ENCODE measurements at regions of chr4 and their contacts with region 1.

Region 1: DNA sequence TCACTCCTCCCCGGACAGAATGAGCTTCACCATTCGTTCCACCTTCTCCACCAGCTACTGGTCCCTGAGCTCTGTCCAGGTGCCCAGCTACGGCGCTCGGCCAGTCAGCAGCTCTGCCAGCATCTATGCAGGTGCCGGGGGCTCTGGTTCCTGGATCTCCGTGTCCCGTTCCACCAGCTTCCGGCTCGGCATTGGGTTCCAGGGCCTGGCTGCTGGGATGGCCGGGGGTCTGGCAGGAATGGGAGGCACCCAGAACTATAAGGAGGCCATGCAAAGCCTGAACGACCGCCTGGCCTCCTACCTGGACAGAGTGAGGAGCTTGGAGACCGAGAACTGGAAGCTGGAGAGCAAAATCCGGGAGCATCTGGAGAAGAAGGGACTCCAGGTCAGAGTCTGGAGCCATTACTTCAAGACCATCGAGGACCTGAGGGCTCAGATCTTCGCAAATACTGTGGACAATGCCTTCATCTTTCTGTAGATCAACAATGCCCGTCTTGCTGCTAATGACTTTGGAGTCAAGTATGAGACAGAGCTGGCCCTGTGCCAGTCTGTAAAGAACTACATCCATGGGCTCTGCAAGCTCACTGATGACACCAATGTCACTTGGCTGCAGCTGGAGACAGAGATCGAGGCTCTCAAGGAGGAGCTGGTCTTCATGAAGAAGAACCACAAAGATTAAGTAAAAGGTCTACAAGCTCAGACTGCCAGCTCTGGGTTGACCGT is 36.3 kb upstream of the N4BP2 start:
- DNase-seq: no peak
- H3K4me3 ChIP-seq: no peak overlapping the region
- H3K27ac ChIP-seq: no peak overlapping the region
- H3K4me1 ChIP-seq: 0 out of 2 replicates have a peak, but pooled peaks cover 4% of the 10 kb centered on the region
- H3K27me3 ChIP-seq: no peaks in the 10 kb centered on the region
- CTCF ChIP-seq: no peak

Region 2: GRCh38 chr4:39994406-39994805 is 26.0 kb before region 1 on chr4:
- CTCF ChIA-PET with region 1: interaction called, 10 read pairs
- POLR2A ChIA-PET with region 1: no interaction called
- intact Hi-C with region 1: no loop called
- DNase-seq: no peak
- H3K4me3 ChIP-seq: no peak overlapping the region
- H3K27ac ChIP-seq: no peak overlapping the region
- H3K4me1 ChIP-seq: peaks cover 19% of the 10 kb centered on the region
- H3K27me3 ChIP-seq: no peaks in the 10 kb centered on the region
- CTCF ChIP-seq: no peak

Region 3: DNA sequence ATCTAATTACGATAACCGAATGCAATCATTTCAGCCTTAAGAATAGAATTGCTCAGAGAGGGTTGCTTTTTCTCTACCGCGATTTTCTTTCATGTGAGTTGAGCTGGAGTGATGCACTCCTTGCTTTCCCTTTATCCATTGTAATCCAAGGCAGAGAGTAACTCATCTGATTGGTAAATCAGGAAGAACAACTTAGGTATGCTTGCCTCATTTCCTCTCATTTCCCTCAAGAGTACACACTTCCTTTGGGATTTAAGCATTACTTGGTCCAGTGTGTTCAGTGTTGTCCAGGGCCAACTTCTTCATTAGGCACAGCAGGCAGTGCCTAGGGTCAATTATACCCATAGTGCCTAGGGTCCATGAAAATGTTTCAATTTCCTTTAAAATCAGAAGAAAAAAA is 20.5 kb after region 1 on chr4:
- CTCF ChIA-PET with region 1: no interaction called
- POLR2A ChIA-PET with region 1: interaction called, 18 read pairs
- intact Hi-C with region 1: no loop called
- DNase-seq: no peak
- H3K4me3 ChIP-seq: no peak overlapping the region
- H3K27ac ChIP-seq: no peak overlapping the region
- H3K4me1 ChIP-seq: peaks cover 5% of the 10 kb centered on the region
- H3K27me3 ChIP-seq: no peaks in the 10 kb centered on the region
- CTCF ChIP-seq: no peak

Region 4: GRCh38 chr4:40309250-40309774 is 288.9 kb after region 1 on chr4:
- CTCF ChIA-PET with region 1: interaction called, 15 read pairs
- POLR2A ChIA-PET with region 1: no interaction called
- intact Hi-C with region 1: no loop called
- DNase-seq: peak; percentile 66 to 77
- H3K4me3 ChIP-seq: peak overlapping the region; percentile 45; the same call in 1 of the 2 replicates
- H3K27ac ChIP-seq: no peak overlapping the region
- H3K4me1 ChIP-seq: peaks cover 31% of the 10 kb centered on the region
- H3K27me3 ChIP-seq: no peaks in the 10 kb centered on the region
- CTCF ChIP-seq: peak; percentile 83